Naive thymus-derived CD4-positive, alpha-beta T cell (primary cell): ENCODE measurements at regions of chr7 and their contacts with region 1.

Region 1: DNA sequence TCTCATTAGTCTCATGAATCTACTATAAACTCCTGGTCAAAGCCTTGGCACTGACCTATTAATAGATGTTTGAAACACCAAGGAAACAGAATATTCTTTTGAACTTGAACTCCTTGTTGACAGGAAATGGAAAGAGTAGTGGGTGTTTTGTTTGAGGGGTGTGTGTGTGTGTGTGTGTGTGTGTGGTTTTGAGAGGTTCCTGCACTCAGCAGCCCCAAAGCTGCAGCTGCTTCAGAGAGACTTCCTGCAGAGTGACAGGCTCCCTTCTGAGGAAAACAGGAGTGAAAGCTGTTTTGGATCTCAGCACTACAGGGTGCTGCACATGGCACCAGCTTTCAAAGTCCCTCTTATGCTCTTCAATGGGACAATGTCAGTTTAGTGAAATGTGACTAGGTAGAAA is 546.5 kb upstream of the STEAP1 start:
- DNase-seq: peak in 8 of 9 donors; percentile 43 to 76 (median 66)
- ATAC-seq: peak; percentile 68
- H3K4me3 ChIP-seq: no peak overlapping the region
- H3K4me3 Mint-ChIP-seq: peak overlapping the region; percentile 61 to 78 (median 68)
- H3K27ac ChIP-seq: peak overlapping the region; percentile 66
- H3K27ac Mint-ChIP-seq: peak overlapping the region; percentile 76 to 96 (median 85)
- H3K4me1 ChIP-seq: peaks cover 0 to 65% of the 10 kb centered on the region in 2 donors
- H3K4me1 Mint-ChIP-seq: peaks cover 27 to 91% (median 85%) of the 10 kb centered on the region in 7 donors
- H3K27me3 ChIP-seq: no peaks in the 10 kb centered on the region
- H3K27me3 Mint-ChIP-seq: peaks cover 0 to 2% (median 0%) of the 10 kb centered on the region in 5 donors

Region 2: DNA sequence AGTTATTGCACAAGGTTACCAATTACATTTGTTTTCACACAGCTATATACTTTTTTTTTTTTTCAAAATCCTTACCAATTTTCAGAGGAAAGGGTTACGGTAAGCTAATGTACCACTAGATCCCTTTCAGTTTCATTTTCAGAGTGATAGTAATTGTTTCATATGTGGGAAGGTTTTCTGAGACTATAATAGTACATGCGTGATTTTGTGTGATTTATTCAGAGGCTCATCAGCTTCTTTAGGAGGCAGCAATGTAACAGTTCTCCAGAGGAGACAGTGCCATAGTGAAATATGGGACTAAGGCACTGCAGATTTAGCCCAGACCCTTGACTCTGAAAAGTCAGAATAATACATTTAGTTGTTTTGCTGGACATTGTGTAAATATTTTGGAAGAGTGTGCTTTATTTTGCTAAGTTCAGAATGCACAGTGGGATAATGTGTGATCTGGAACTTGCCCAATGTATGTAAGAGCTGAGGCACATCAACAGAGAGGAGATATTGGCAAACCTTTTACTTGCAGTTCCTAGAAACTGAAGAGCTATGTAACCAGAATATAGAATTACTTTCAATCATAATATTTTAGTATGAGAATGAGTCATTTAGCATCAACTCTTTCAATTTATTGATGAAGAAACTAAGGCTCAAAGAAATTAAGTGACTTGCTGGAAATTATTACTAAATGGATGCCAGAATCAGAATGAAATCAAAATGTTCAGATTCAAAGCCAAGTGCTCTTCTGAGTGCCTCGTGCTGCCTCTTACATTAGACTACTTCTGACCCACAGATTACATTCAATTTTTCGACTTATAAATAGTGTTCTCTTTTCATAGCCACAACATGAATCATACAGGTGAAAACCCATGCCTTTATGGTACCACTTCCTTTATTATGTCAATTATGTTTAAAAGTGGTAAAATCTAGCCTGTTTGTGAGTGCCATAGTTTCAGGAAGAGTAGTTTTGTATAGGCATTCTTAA is 604.5 kb before region 1 on chr7:
- CTCF ChIA-PET with region 1: no interaction called
- POLR2A ChIA-PET with region 1: no interaction called
- intact Hi-C with region 1: loop called in 1 of 2 experiments (anchors 5 kb)
- DNase-seq: peak in 3 of 9 donors; percentile 7 to 22 (median 17)
- ATAC-seq: peak; percentile 53
- H3K4me3 ChIP-seq: peak overlapping the region; percentile 54
- H3K4me3 Mint-ChIP-seq: peak overlapping the region; percentile 63 to 90 (median 86)
- H3K27ac ChIP-seq: peak overlapping the region; percentile 33
- H3K27ac Mint-ChIP-seq: peak overlapping the region; percentile 40 to 89 (median 78)
- H3K4me1 ChIP-seq: no peaks in the 10 kb centered on the region
- H3K4me1 Mint-ChIP-seq: peaks cover 10 to 26% (median 19%) of the 10 kb centered on the region in 7 donors
- H3K27me3 ChIP-seq: no peaks in the 10 kb centered on the region
- H3K27me3 Mint-ChIP-seq: peaks cover 0 to 6% (median 0%) of the 10 kb centered on the region in 5 donors

Region 3: DNA sequence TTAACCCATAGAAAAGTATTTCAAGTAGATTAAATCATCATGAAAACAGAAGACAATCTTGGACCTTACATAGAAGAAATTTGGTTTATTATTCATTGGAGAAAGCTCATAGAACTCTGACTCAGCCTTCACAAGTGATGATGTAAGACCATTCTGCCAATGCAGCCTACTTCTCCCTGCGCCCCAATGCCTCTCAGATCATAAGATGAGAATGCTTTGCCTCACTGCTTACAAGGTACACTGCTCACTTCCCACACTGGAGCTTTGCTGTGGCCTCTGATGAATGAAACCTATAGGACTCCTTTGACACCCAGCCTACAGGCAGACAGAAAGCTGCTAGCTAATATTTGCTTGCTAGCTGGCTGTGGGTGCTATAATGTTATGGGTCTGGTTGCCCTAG is 22.9 kb before region 1 on chr7:
- CTCF ChIA-PET with region 1: no interaction called
- POLR2A ChIA-PET with region 1: no interaction called
- intact Hi-C with region 1: loop called in 1 of 2 experiments (anchors 1 kb)
- DNase-seq: no peak
- ATAC-seq: no peak
- H3K4me3 ChIP-seq: no peak overlapping the region
- H3K4me3 Mint-ChIP-seq: no peak overlapping the region
- H3K27ac ChIP-seq: no peak overlapping the region
- H3K27ac Mint-ChIP-seq: no peak overlapping the region
- H3K4me1 ChIP-seq: no peaks in the 10 kb centered on the region
- H3K4me1 Mint-ChIP-seq: no peaks in the 10 kb centered on the region
- H3K27me3 ChIP-seq: no peaks in the 10 kb centered on the region
- H3K27me3 Mint-ChIP-seq: peaks cover 0 to 2% (median 0%) of the 10 kb centered on the region in 5 donors

Region 4: GRCh38 chr7:90346336-90347125 is 738.7 kb after region 1 on chr7 and contains the start of gene GTPBP10:
- CTCF ChIA-PET with region 1: no interaction called
- POLR2A ChIA-PET with region 1: no interaction called
- intact Hi-C with region 1: loop called in 1 of 2 experiments (anchors 10 kb)
- DNase-seq: peak; percentile 88 to 96 (median 94)
- ATAC-seq: peak; percentile 99
- H3K4me3 ChIP-seq: peak within 1 kb of the TSS; percentile 83
- H3K4me3 Mint-ChIP-seq: peak within 1 kb of the TSS; percentile 93 to 99 (median 98)
- H3K27ac ChIP-seq: peak within 1 kb of the TSS; percentile 95
- H3K27ac Mint-ChIP-seq: peak within 1 kb of the TSS; percentile 96 to 100 (median 99)
- H3K4me1 ChIP-seq: peaks cover 13 to 26% of the 10 kb centered on the region in 2 donors
- H3K4me1 Mint-ChIP-seq: peaks cover 23 to 65% (median 53%) of the 10 kb centered on the region in 7 donors
- H3K27me3 ChIP-seq: no peaks in the 10 kb centered on the region
- H3K27me3 Mint-ChIP-seq: peaks cover 0 to 2% (median 0%) of the 10 kb centered on the region in 5 donors
- total RNA-seq, gene GTPBP10: 21.5 to 51.4 (median 29.8) TPM